Naive thymus-derived CD8-positive, alpha-beta T cell (primary cell): ENCODE measurements at regions of chr3 and their contacts with region 1.

Region 1: GRCh38 chr3:56783644-56784447 is 17.9 kb downstream of the ARHGEF3 start:
- DNase-seq: peak; percentile 16 to 90 (median 72)
- ATAC-seq: peak; percentile 85 to 90
- H3K4me3 Mint-ChIP-seq: peak overlapping the region; percentile 54 to 84 (median 78)
- H3K27ac Mint-ChIP-seq: peak overlapping the region; percentile 88 to 98 (median 96)
- H3K4me1 Mint-ChIP-seq: peaks cover 50 to 100% (median 98%) of the 10 kb centered on the region in 4 donors
- H3K27me3 Mint-ChIP-seq: no peaks in the 10 kb centered on the region

Region 2: GRCh38 chr3:56725175-56725574 is 58.7 kb before region 1 on chr3:
- POLR2A ChIA-PET with region 1: interaction called, 16 read pairs
- DNase-seq: peak; percentile 10 to 77 (median 60)
- ATAC-seq: peak; percentile 92 to 97
- H3K4me3 Mint-ChIP-seq: peak overlapping the region; percentile 65 to 83 (median 74)
- H3K27ac Mint-ChIP-seq: peak overlapping the region; percentile 81 to 98 (median 94)
- H3K4me1 Mint-ChIP-seq: peaks cover 23 to 73% (median 62%) of the 10 kb centered on the region in 4 donors
- H3K27me3 Mint-ChIP-seq: no peaks in the 10 kb centered on the region

Region 3: GRCh38 chr3:56753206-56753820 is 30.5 kb before region 1 on chr3:
- POLR2A ChIA-PET with region 1: interaction called, 70 read pairs
- DNase-seq: peak in 1 of 10 donors; percentile 15
- ATAC-seq: peak in 1 of 2 donors; percentile 67
- H3K4me3 Mint-ChIP-seq: peak overlapping the region in 9 of 10 donors; percentile 8 to 96 (median 88)
- H3K27ac Mint-ChIP-seq: peak overlapping the region; percentile 78 to 99 (median 97)
- H3K4me1 Mint-ChIP-seq: peaks cover 32 to 82% (median 69%) of the 10 kb centered on the region in 4 donors
- H3K27me3 Mint-ChIP-seq: no peaks in the 10 kb centered on the region

Region 4: GRCh38 chr3:56758539-56758981 is 25.3 kb before region 1 on chr3:
- POLR2A ChIA-PET with region 1: interaction called, 70 read pairs
- DNase-seq: peak in 2 of 10 donors; percentile 11 to 35
- ATAC-seq: peak in 1 of 2 donors; percentile 63
- H3K4me3 Mint-ChIP-seq: peak overlapping the region; percentile 33 to 84 (median 66)
- H3K27ac Mint-ChIP-seq: peak overlapping the region; percentile 58 to 98 (median 90)
- H3K4me1 Mint-ChIP-seq: peaks cover 49 to 93% (median 85%) of the 10 kb centered on the region in 4 donors
- H3K27me3 Mint-ChIP-seq: no peaks in the 10 kb centered on the region

Region 5: GRCh38 chr3:56769116-56769707 is 14.6 kb before region 1 on chr3:
- POLR2A ChIA-PET with region 1: interaction called, 38 read pairs
- DNase-seq: no peak
- ATAC-seq: no peak
- H3K4me3 Mint-ChIP-seq: peak overlapping the region in 4 of 10 donors; percentile 4 to 40 (median 38)
- H3K27ac Mint-ChIP-seq: peak overlapping the region; percentile 47 to 91 (median 76)
- H3K4me1 Mint-ChIP-seq: peaks cover 44 to 77% (median 72%) of the 10 kb centered on the region in 4 donors
- H3K27me3 Mint-ChIP-seq: no peaks in the 10 kb centered on the region